HCT116 (cell line): ENCODE measurements at regions of chr7 and their contacts with region 1.

Region 1: GRCh38 chr7:34916267-34916666 is 121.0 kb downstream of the DPY19L1 start:
- DNase-seq: no peak
- ATAC-seq: no peak
- H3K4me3 ChIP-seq: no peak overlapping the region
- H3K27ac ChIP-seq: no peak overlapping the region
- H3K4me1 ChIP-seq: no peaks in the 10 kb centered on the region
- H3K27me3 ChIP-seq: no peaks in the 10 kb centered on the region
- CTCF ChIP-seq: no peak
- POLR2A ChIP-seq: no peak
- RAD21 ChIP-seq: no peak

Region 2: GRCh38 chr7:34759452-34760125 is 156.7 kb before region 1 on chr7:
- CTCF ChIA-PET with region 1: no interaction called
- POLR2A ChIA-PET with region 1: no interaction called
- RAD21 ChIA-PET with region 1: no interaction called
- intact Hi-C with region 1: loop called (anchors 2 kb)
- DNase-seq: peak; percentile 48
- ATAC-seq: peak; percentile 92
- H3K4me3 ChIP-seq: no peak overlapping the region
- H3K27ac ChIP-seq: no peak overlapping the region
- H3K4me1 ChIP-seq: peaks cover 0 to 7% of the 10 kb centered on the region in 2 experiments; a peak in 1 of 4 replicates
- H3K27me3 ChIP-seq: no peaks in the 10 kb centered on the region
- CTCF ChIP-seq: peak; percentile 51 to 71 (median 68); a peak in 5 of 6 replicates
- POLR2A ChIP-seq: no peak
- RAD21 ChIP-seq: peak; percentile 79